ENCODE measurements at regions of chr1 and their contacts with region 1.

Region 1: GRCh38 chr1:116485071-116485735 is 85.6 kb downstream of the CD58 start:
- DNase-seq: peak; percentile 68 to 87 (median 77)
- H3K4me3 ChIP-seq: no peak overlapping the region
- H3K4me3 Mint-ChIP-seq: no peak overlapping the region
- H3K27ac ChIP-seq: no peak overlapping the region
- H3K27ac Mint-ChIP-seq: no peak overlapping the region
- H3K4me1 ChIP-seq: no peaks in the 10 kb centered on the region
- H3K4me1 Mint-ChIP-seq: peaks cover 0 to 3% (median 0%) of the 10 kb centered on the region in 3 donors
- H3K27me3 ChIP-seq: no peaks in the 10 kb centered on the region
- H3K27me3 Mint-ChIP-seq: peaks cover 0 to 1% of the 10 kb centered on the region in 2 donors

Region 2: GRCh38 chr1:116168277-116169097 is 316.7 kb before region 1 on chr1:
- CTCF ChIA-PET with region 1: interaction called, 33 read pairs
- POLR2A ChIA-PET with region 1: no interaction called
- DNase-seq: peak; percentile 77 to 88 (median 79)
- H3K4me3 ChIP-seq: peak overlapping the region; percentile 73
- H3K4me3 Mint-ChIP-seq: peak overlapping the region; percentile 75 to 92 (median 82)
- H3K27ac ChIP-seq: peak overlapping the region; percentile 5
- H3K27ac Mint-ChIP-seq: peak overlapping the region; percentile 78 to 95 (median 88)
- H3K4me1 ChIP-seq: peaks cover 14% of the 10 kb centered on the region
- H3K4me1 Mint-ChIP-seq: peaks cover 14 to 19% (median 16%) of the 10 kb centered on the region in 3 donors
- H3K27me3 ChIP-seq: peaks cover 3% of the 10 kb centered on the region
- H3K27me3 Mint-ChIP-seq: peaks cover 0 to 1% of the 10 kb centered on the region in 2 donors

Region 3: GRCh38 chr1:116360429-116361173 is 124.6 kb before region 1 on chr1:
- CTCF ChIA-PET with region 1: interaction called, 35 read pairs
- POLR2A ChIA-PET with region 1: no interaction called
- DNase-seq: peak in 2 of 5 donors; percentile 18 to 39
- H3K4me3 ChIP-seq: no peak overlapping the region
- H3K4me3 Mint-ChIP-seq: no peak overlapping the region
- H3K27ac ChIP-seq: no peak overlapping the region
- H3K27ac Mint-ChIP-seq: no peak overlapping the region
- H3K4me1 ChIP-seq: peaks cover 4% of the 10 kb centered on the region
- H3K4me1 Mint-ChIP-seq: peaks cover 8 to 12% (median 8%) of the 10 kb centered on the region in 3 donors
- H3K27me3 ChIP-seq: no peaks in the 10 kb centered on the region
- H3K27me3 Mint-ChIP-seq: peaks cover 0 to 4% of the 10 kb centered on the region in 2 donors

Region 4: GRCh38 chr1:116474921-116475849 is 10.0 kb before region 1 on chr1:
- CTCF ChIA-PET with region 1: interaction called, 13 read pairs
- POLR2A ChIA-PET with region 1: no interaction called
- DNase-seq: no peak
- H3K4me3 ChIP-seq: no peak overlapping the region
- H3K4me3 Mint-ChIP-seq: no peak overlapping the region
- H3K27ac ChIP-seq: no peak overlapping the region
- H3K27ac Mint-ChIP-seq: no peak overlapping the region
- H3K4me1 ChIP-seq: no peaks in the 10 kb centered on the region
- H3K4me1 Mint-ChIP-seq: peaks cover 6 to 12% (median 7%) of the 10 kb centered on the region in 3 donors
- H3K27me3 ChIP-seq: no peaks in the 10 kb centered on the region
- H3K27me3 Mint-ChIP-seq: peaks cover 0 to 5% of the 10 kb centered on the region in 2 donors

Region 5: DNA sequence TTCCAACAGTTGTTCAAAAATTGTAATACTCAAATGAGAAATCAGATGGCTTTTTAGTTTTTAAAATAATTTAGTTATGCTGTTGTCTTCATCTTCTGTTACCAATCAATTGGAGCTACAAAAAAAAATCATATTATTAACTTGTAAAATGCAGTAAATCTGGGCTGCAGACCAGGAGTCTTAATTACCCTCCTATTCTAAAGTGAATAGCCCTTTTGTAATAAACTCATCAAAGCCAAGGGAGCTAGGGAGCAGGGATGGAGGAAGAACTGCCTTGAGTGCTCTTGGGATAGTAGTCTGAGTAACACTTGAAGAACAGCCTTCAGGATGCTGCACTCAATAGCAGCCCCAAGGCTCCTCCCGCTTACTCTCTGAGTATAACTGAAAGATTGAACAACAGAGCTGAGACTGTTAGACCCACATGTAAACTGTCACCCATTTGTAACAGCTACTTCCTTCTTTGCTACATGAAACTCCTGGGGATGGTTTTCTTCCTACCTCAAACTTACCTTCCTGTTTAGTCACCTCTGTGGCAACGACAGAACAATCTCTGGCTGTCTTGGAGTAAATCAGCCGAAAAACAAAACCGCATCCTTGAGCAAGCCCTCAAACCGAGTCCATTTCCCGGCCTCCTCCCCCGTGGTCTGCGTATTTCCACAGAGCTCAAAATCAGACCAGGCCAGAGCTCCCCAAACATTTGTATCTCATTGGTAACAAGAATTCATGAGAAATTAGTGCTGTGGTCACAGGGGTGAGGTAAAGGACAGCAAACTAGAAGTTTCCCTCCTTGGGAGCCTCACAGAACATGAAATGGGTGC is 29.7 kb after region 1 on chr1:
- CTCF ChIA-PET with region 1: interaction called, 21 read pairs
- POLR2A ChIA-PET with region 1: no interaction called
- DNase-seq: peak; percentile 37 to 77 (median 59)
- H3K4me3 ChIP-seq: peak overlapping the region; percentile 10
- H3K4me3 Mint-ChIP-seq: peak overlapping the region; percentile 37 to 91 (median 75)
- H3K27ac ChIP-seq: peak overlapping the region; percentile 77
- H3K27ac Mint-ChIP-seq: peak overlapping the region; percentile 91 to 100 (median 99)
- H3K4me1 ChIP-seq: peaks cover 35% of the 10 kb centered on the region
- H3K4me1 Mint-ChIP-seq: peaks cover 57 to 75% (median 74%) of the 10 kb centered on the region in 3 donors
- H3K27me3 ChIP-seq: no peaks in the 10 kb centered on the region
- H3K27me3 Mint-ChIP-seq: no peaks in the 10 kb centered on the region

Region 6: DNA sequence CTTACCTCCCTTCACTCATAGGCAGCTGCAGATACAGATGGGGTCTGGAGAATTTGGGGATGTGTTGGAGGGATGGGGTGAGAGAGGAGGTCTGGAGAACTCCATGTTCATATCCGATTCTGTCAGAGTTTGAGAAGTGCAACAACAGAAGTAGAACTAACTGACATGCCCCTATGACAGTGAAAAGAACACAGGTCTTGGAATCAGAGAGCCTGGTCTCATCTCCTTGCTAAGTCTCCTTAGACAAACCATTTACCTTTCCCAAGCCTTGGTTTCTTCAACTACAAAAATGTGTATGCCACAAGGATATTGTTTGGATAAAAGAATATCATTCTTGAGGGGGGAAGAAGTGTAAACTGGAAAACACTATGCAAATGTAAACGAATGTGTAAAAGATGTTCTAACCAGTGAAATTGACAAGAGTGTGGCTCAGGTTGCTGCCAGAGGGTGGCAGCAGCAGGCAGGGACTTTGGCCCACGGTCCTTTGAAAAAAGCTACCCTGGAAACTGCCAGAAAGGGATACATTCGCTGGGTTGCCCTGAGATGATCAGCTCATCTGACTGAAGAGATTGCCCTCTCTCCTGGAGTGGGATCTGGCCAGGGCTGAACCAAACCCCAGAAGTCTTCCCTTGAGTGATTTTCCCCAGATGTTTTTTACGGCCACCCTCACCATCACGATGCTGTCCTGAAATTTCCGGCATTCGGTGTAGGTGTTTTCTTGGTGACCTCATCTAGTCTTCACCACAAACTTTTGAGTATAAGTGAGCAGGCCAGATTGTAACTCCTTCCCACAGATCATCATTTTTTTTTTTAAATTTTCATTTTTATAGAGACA is 252.0 kb after region 1 on chr1:
- CTCF ChIA-PET with region 1: no interaction called
- POLR2A ChIA-PET with region 1: no interaction called
- DNase-seq: peak; percentile 53 to 81 (median 77)
- H3K4me3 ChIP-seq: peak overlapping the region; percentile 37
- H3K4me3 Mint-ChIP-seq: peak overlapping the region; percentile 66 to 81 (median 79)
- H3K27ac ChIP-seq: peak overlapping the region; percentile 79
- H3K27ac Mint-ChIP-seq: peak overlapping the region; percentile 99 to 100 (median 100)
- H3K4me1 ChIP-seq: peaks cover 42% of the 10 kb centered on the region
- H3K4me1 Mint-ChIP-seq: peaks cover 43 to 47% (median 47%) of the 10 kb centered on the region in 3 donors
- H3K27me3 ChIP-seq: no peaks in the 10 kb centered on the region
- H3K27me3 Mint-ChIP-seq: peaks cover 0 to 1% of the 10 kb centered on the region in 2 donors